GM10248 (cell line): ENCODE measurements at regions of chr1 and their contacts with region 1.

Region 1: GRCh38 chr1:220157738-220158137 is 63.8 kb downstream of the IARS2 start:
- DNase-seq: no peak
- CTCF ChIP-seq: no peak

Region 2: GRCh38 chr1:220144051-220144450 is 13.7 kb before region 1 on chr1:
- CTCF ChIA-PET with region 1: interaction called, 15 read pairs
- POLR2A ChIA-PET with region 1: no interaction called
- DNase-seq: no peak
- CTCF ChIP-seq: no peak

Region 3: GRCh38 chr1:220189750-220190347 is 32.1 kb after region 1 on chr1:
- CTCF ChIA-PET with region 1: interaction called, 10 read pairs
- POLR2A ChIA-PET with region 1: no interaction called
- DNase-seq: peak; percentile 19
- CTCF ChIP-seq: peak; percentile 44